ENCODE measurements at regions of chr1 and their contacts with region 1.

Region 1: DNA sequence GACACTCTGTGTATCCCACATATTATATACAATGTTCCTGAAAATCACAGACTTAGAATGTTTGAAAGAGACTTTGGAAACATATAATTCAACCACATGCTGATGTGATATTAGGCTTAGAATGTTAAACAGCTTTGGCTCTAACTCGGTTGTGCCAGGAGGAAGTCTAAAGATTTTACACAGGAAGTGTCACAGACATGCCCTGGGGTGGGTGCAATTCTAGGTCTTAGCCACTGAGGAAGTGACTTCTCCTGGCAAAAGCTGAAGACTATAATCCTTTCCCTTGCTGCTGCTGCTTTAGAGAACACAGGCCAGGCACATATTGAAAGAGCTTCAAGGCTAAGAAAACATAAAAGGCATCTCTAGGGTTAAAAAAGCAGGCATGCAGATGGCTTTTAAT is 51.0 kb downstream of the RPL5 start:
- DNase-seq: peak; percentile 27 to 61 (median 37)
- H3K4me3 ChIP-seq: no peak overlapping the region
- H3K4me3 Mint-ChIP-seq: peak overlapping the region in 7 of 8 donors; percentile 0 to 66 (median 52)
- H3K27ac ChIP-seq: peak overlapping the region; percentile 12
- H3K27ac Mint-ChIP-seq: peak overlapping the region; percentile 72 to 94 (median 86)
- H3K4me1 ChIP-seq: peaks cover 51% of the 10 kb centered on the region
- H3K4me1 Mint-ChIP-seq: peaks cover 30 to 49% (median 36%) of the 10 kb centered on the region in 4 donors
- H3K27me3 ChIP-seq: no peaks in the 10 kb centered on the region
- H3K27me3 Mint-ChIP-seq: no peaks in the 10 kb centered on the region

Region 2: GRCh38 chr1:92851729-92852128 is 31.1 kb before region 1 on chr1:
- CTCF ChIA-PET with region 1: no interaction called
- POLR2A ChIA-PET with region 1: no interaction called
- intact Hi-C with region 1: no loop called
- DNase-seq: no peak
- H3K4me3 ChIP-seq: no peak overlapping the region
- H3K4me3 Mint-ChIP-seq: no peak overlapping the region
- H3K27ac ChIP-seq: no peak overlapping the region
- H3K27ac Mint-ChIP-seq: peak overlapping the region in 2 of 7 donors; percentile 17 to 46
- H3K4me1 ChIP-seq: peaks cover 7% of the 10 kb centered on the region
- H3K4me1 Mint-ChIP-seq: peaks cover 6 to 23% (median 9%) of the 10 kb centered on the region in 4 donors
- H3K27me3 ChIP-seq: no peaks in the 10 kb centered on the region
- H3K27me3 Mint-ChIP-seq: no peaks in the 10 kb centered on the region

Region 3: DNA sequence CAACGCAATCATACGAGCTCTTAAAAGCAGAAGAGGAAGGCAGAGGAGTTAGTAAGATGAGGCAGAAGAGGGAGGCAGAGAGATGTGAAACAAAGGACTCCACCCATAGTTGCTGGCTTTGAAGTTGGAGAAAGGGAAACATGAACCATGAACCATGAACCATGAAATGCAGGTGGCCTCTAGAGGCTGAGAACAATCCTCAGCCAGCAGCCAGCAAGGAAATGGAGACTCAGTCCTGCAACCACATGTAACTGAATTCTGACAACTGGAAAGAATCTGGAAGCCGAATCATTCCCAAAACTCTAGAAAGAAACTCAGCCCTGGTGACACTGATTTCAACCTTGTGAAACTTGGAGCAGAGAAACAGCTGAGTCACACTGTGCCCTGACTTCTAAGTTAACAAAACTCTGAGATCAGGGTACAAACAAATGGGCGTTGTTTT is 68.3 kb after region 1 on chr1:
- CTCF ChIA-PET with region 1: interaction called, 4 read pairs
- POLR2A ChIA-PET with region 1: interaction called, 4 read pairs
- intact Hi-C with region 1: loop called (anchors 2 kb)
- DNase-seq: peak in 4 of 5 donors; percentile 33 to 47 (median 39)
- H3K4me3 ChIP-seq: no peak overlapping the region
- H3K4me3 Mint-ChIP-seq: no peak overlapping the region
- H3K27ac ChIP-seq: peak overlapping the region; percentile 23
- H3K27ac Mint-ChIP-seq: no peak overlapping the region
- H3K4me1 ChIP-seq: peaks cover 59% of the 10 kb centered on the region
- H3K4me1 Mint-ChIP-seq: peaks cover 27 to 47% (median 31%) of the 10 kb centered on the region in 4 donors
- H3K27me3 ChIP-seq: no peaks in the 10 kb centered on the region
- H3K27me3 Mint-ChIP-seq: no peaks in the 10 kb centered on the region

Measured in CD4-positive, alpha-beta memory T cell (primary cell).